ENCODE measurements at regions of chr11 and their contacts with region 1.

Region 1: GRCh38 chr11:64152841-64153691 is 12.8 kb downstream of the MACROD1 start:
- DNase-seq: peak; percentile 51 to 72
- H3K4me3 ChIP-seq: no peak overlapping the region
- H3K27ac ChIP-seq: no peak overlapping the region
- H3K4me1 ChIP-seq: peaks cover 0 to 15% (median 8%) of the 10 kb centered on the region in 4 donors
- H3K27me3 ChIP-seq: no peaks in the 10 kb centered on the region
- CTCF ChIP-seq: peak; percentile 95 to 100

Region 2: GRCh38 chr11:63582935-63583677 is 570.0 kb before region 1 on chr11:
- intact Hi-C with region 1: no loop called
- DNase-seq: no peak
- H3K4me3 ChIP-seq: no peak overlapping the region
- H3K27ac ChIP-seq: no peak overlapping the region
- H3K4me1 ChIP-seq: no peaks in the 10 kb centered on the region
- H3K27me3 ChIP-seq: no peaks in the 10 kb centered on the region
- CTCF ChIP-seq: no peak

Region 3: GRCh38 chr11:64000026-64000739 is 152.9 kb before region 1 on chr11:
- intact Hi-C with region 1: loop called (anchors 2 kb)
- DNase-seq: peak; percentile 51 to 76
- H3K4me3 ChIP-seq: peak overlapping the region; percentile 39 to 47
- H3K27ac ChIP-seq: peak overlapping the region; percentile 3 to 10
- H3K4me1 ChIP-seq: peaks cover 0 to 33% (median 22%) of the 10 kb centered on the region in 4 donors
- H3K27me3 ChIP-seq: peaks cover 0 to 7% of the 10 kb centered on the region in 2 donors
- CTCF ChIP-seq: peak; percentile 80 to 95

Measured in tibial artery (tissue), 4 donors.